ENCODE measurements at regions of chr1 and their contacts with region 1.

Region 1: DNA sequence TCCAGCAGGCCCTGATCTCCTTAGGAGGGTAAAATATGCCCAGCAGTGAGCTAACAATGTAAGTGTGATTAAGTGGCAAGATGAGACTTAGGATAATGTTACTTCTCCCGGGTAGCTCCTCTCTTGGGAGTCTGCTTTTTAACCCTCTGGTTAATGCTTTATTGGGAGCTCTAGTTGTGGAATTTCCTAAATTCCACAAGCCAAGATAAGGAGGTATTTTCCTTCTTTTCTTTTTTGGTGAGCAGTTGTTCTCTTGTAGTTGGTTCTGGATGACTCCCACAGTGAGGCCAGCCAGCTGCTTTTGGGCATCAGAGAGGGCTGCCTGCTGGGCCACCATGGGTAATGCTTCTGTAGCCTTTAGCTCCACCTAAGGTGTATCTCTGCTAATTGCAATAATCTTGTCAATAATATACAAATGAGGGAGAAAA is 19.3 kb downstream of the C1orf52 start:
- DNase-seq: no peak
- ATAC-seq: no peak
- H3K4me3 ChIP-seq: no peak overlapping the region
- H3K27ac ChIP-seq: no peak overlapping the region
- H3K4me1 ChIP-seq: peaks cover 12% of the 10 kb centered on the region in 2 donors
- H3K27me3 ChIP-seq: no peaks in the 10 kb centered on the region
- CTCF ChIP-seq: no peak
- POLR2A ChIP-seq: no peak

Region 2: GRCh38 chr1:84506002-84506728 is 734.0 kb before region 1 on chr1 and contains the starts of genes GNG5 and SPATA1:
- in situ Hi-C with region 1: no loop called
- intact Hi-C with region 1: no loop called
- DNase-seq: peak; percentile 97 to 98
- ATAC-seq: peak; percentile 86 to 91
- H3K4me3 ChIP-seq: peak within 1 kb of the TSS; percentile 77 to 92 (median 81)
- H3K27ac ChIP-seq: peak within 1 kb of the TSS; percentile 96 to 97 (median 96)
- H3K4me1 ChIP-seq: peaks cover 34% of the 10 kb centered on the region in 2 donors
- H3K27me3 ChIP-seq: no peaks in the 10 kb centered on the region
- CTCF ChIP-seq: no peak
- POLR2A ChIP-seq: peak; percentile 88 to 93
- total RNA-seq, gene GNG5: 122 to 168 (median 128) TPM
- total RNA-seq, gene SPATA1: 0.35 TPM in 1 of 4 donors, not detected in the others

Region 3: GRCh38 chr1:85109475-85109874 is 130.7 kb before region 1 on chr1:
- in situ Hi-C with region 1: loop called in 1 of 4 experiments (anchors 10 kb)
- intact Hi-C with region 1: loop called (anchors 1 kb)
- DNase-seq: peak; percentile 8 to 19
- ATAC-seq: peak in 1 of 2 donors; percentile 79
- H3K4me3 ChIP-seq: no peak overlapping the region
- H3K27ac ChIP-seq: no peak overlapping the region
- H3K4me1 ChIP-seq: no peaks in the 10 kb centered on the region
- H3K27me3 ChIP-seq: no peaks in the 10 kb centered on the region
- CTCF ChIP-seq: peak; percentile 30 to 70 (median 53)
- POLR2A ChIP-seq: no peak

Region 4: GRCh38 chr1:85334962-85335361 is 94.8 kb after region 1 on chr1:
- in situ Hi-C with region 1: no loop called
- intact Hi-C with region 1: no loop called
- DNase-seq: no peak
- ATAC-seq: no peak
- H3K4me3 ChIP-seq: no peak overlapping the region
- H3K27ac ChIP-seq: no peak overlapping the region
- H3K4me1 ChIP-seq: peaks cover 23 to 44% of the 10 kb centered on the region in 2 donors
- H3K27me3 ChIP-seq: no peaks in the 10 kb centered on the region
- CTCF ChIP-seq: no peak
- POLR2A ChIP-seq: no peak

Region 5: GRCh38 chr1:85351202-85351828 is 111.1 kb after region 1 on chr1:
- in situ Hi-C with region 1: no loop called
- intact Hi-C with region 1: no loop called
- DNase-seq: no peak
- ATAC-seq: peak in 1 of 2 donors; percentile 41
- H3K4me3 ChIP-seq: no peak overlapping the region
- H3K27ac ChIP-seq: peak overlapping the region in 1 of 4 donors; percentile 58
- H3K4me1 ChIP-seq: peaks cover 9 to 13% of the 10 kb centered on the region in 2 donors
- H3K27me3 ChIP-seq: no peaks in the 10 kb centered on the region
- CTCF ChIP-seq: no peak
- POLR2A ChIP-seq: no peak

Measured in gastrocnemius medialis (tissue), 4 donors.